Natural killer cell (primary cell): ENCODE measurements at regions of chr6 and their contacts with region 1.

Region 1: DNA sequence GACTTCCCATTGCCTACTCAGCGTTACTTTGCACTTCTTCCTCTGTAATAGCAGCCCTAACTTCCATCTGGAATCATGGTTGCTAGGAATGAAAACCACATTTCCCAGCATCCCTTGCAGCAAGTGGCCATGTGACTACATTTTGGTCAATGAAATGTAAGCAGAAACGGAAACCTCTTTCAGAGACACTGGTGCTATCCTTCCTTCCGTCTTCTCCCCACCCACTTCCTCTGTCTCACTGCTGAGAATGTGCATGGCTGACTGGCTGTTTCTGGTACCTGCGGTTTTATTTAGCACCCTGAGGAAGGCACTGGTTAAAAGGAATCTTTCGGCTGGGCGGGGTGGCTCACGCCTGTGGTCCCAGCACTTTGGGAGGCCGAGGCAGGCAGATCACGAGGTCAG is 107.4 kb downstream of the SCML4 start:
- DNase-seq: peak; percentile 58 to 93
- ATAC-seq: peak; percentile 84 to 93 (median 87)
- H3K4me3 ChIP-seq: no peak overlapping the region
- H3K4me3 Mint-ChIP-seq: peak overlapping the region; percentile 76
- H3K27ac ChIP-seq: peak overlapping the region; percentile 86
- H3K27ac Mint-ChIP-seq: peak overlapping the region; percentile 90 to 91
- H3K4me1 ChIP-seq: peaks cover 63% of the 10 kb centered on the region
- H3K4me1 Mint-ChIP-seq: peaks cover 56 to 65% of the 10 kb centered on the region in 2 donors
- H3K27me3 ChIP-seq: no peaks in the 10 kb centered on the region
- H3K27me3 Mint-ChIP-seq: no peaks in the 10 kb centered on the region
- CTCF ChIP-seq: no peak

Region 2: GRCh38 chr6:107731422-107732319 is 15.0 kb after region 1 on chr6:
- intact Hi-C with region 1: loop called (anchors 1 kb)
- DNase-seq: peak in 1 of 2 donors; percentile 59
- ATAC-seq: peak in 1 of 3 donors; percentile 46
- H3K4me3 ChIP-seq: peak overlapping the region; percentile 43
- H3K4me3 Mint-ChIP-seq: peak overlapping the region; percentile 45
- H3K27ac ChIP-seq: peak overlapping the region; percentile 49
- H3K27ac Mint-ChIP-seq: peak overlapping the region in 1 of 2 donors; percentile 54
- H3K4me1 ChIP-seq: peaks cover 66% of the 10 kb centered on the region
- H3K4me1 Mint-ChIP-seq: peaks cover 37 to 55% of the 10 kb centered on the region in 2 donors
- H3K27me3 ChIP-seq: no peaks in the 10 kb centered on the region
- H3K27me3 Mint-ChIP-seq: no peaks in the 10 kb centered on the region
- CTCF ChIP-seq: no peak